ENCODE measurements at regions of chr12 and their contacts with region 1.

Region 1: DNA sequence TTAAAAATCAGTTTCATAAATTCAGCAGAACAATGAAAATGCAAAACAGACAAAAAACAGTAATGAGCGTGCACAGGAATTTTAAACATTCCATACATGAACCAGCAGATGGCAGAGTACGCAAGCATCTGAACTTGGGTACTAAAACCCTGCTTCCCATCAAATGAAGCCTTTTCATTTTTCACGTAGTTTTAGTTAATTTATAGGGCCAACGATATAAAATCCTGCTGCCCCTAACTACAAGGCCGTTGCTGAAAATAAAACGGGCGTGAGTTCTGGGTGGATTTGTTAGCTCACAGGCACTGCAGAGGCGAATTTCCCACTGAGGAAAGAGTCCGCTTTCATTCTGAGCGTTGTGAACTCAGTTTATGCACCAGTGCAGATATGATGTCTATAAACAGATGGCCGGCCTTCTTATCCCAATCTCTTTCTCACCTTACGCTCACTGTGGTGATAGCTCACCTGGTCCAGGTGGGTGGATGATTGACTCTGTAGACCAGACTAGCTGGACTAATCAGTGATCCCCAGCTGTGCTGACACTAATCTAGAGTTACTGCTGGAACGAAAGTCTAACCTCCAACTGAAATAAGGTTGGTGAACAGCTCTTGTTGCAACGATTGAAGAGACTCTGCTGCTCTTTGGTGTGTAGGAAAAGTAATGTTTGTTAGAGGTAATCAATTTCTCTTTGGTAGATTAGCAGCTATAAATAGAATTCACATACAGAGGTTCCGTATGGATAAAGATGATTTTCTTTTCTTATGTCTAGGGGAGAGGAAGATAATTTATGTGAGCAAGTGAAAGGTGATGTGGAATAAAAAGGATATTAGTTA is 89.2 kb downstream of the PDZRN4 start:
- DNase-seq: peak; percentile 53 to 75
- H3K4me3 ChIP-seq: no peak overlapping the region; the same call in 1 of the 2 replicates
- H3K4me1 ChIP-seq: peaks cover 14% of the 10 kb centered on the region
- H3K27me3 ChIP-seq: no peaks in the 10 kb centered on the region

Region 2: GRCh38 chr12:41034686-41035085 is 242.6 kb before region 1 on chr12:
- in situ Hi-C with region 1: no loop called
- DNase-seq: no peak
- H3K4me3 ChIP-seq: no peak overlapping the region
- H3K4me1 ChIP-seq: no peaks in the 10 kb centered on the region
- H3K27me3 ChIP-seq: no peaks in the 10 kb centered on the region

Region 3: GRCh38 chr12:41327096-41327895 is 50.0 kb after region 1 on chr12:
- in situ Hi-C with region 1: no loop called
- DNase-seq: no peak
- H3K4me3 ChIP-seq: no peak overlapping the region
- H3K4me1 ChIP-seq: no peaks in the 10 kb centered on the region
- H3K27me3 ChIP-seq: no peaks in the 10 kb centered on the region

Region 4: GRCh38 chr12:41663598-41664258 is 386.4 kb after region 1 on chr12:
- in situ Hi-C with region 1: loop called (anchors 25 kb)
- DNase-seq: peak; percentile 19 to 65
- H3K4me3 ChIP-seq: no peak overlapping the region
- H3K4me1 ChIP-seq: no peaks in the 10 kb centered on the region
- H3K27me3 ChIP-seq: no peaks in the 10 kb centered on the region

Region 5: DNA sequence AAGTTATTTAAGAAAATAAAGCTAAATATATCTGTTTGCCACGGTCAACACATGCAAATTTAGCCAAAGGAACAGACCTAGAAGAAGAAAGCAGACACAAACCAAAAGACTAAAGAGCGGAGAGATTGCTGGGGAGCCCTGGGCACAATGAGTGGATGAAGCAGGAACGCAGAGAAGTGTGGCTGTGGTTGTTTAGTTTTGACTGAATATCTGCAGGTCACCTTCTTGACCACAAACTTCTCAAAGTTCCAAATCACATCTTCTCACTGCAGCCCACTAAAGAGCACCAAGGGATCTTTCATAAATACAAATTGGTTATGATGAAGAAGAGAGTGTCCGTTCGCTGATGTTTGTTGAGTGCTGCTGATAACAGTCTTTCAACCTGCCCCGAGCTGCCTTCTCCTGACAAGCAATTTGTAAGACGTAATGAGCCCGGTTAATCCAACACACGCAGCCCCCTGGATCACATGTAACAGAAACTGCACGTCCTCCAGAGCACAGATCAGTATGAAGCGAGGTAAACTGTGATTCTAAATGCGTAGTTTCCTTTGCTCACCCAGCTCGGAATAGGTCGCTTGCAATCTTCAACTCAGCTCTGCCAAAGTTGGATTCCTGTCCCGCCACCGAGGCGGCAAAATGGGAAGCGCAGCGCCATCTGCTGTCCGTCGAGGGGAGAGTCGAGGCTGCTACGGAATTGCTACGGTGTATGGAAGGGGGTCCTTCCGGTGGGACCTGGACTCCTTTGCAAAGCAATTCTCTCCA is 746.6 kb after region 1 on chr12:
- in situ Hi-C with region 1: loop called (anchors 5 kb)
- DNase-seq: peak; percentile 71 to 88
- H3K4me3 ChIP-seq: no peak overlapping the region
- H3K4me1 ChIP-seq: peaks cover 5% of the 10 kb centered on the region
- H3K27me3 ChIP-seq: no peaks in the 10 kb centered on the region

Measured in HAP-1 (cell line).